ENCODE measurements at regions of chrX and their contacts with region 1.

Region 1: DNA sequence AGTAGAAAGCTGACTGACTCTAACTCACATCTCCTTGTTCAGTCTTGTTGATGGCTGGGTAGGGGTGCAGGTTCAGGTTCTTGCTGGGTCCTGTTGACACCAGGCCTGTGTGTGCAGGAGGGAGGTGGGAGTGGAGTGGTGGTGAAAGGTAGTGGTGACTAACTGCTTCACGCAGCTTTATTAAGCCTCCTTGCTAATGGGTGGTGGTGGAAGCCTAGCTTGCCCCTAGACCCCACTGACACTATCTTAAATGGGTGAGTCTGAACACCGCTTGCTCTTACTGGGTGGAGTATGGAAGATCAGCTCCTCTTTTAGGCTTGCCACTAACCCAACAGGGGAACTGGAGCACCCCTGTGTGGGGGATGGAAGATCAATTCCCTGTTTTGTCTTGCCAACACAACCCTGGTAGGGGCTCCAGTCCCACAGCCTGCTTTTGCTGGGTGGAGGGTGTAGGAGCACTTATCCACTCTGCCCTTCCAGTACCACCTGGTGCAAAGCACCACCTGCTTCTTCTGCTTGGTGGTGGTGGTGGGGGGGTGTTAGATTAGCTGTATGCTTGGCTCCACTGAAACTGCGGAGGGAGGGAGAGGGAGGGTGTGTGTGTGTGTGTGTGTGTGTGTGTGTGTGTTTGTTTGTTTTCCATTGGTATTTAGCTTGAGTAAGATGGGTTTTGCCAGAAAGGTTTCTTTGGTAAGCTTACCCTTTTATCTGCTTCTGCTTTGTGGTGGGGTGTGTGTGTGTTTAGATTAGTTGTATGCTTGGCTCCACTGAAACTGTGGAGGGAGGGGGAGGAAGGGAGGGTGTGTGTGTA is 25.6 kb downstream of the KDM6A start:
- DNase-seq: peak in 2 of 4 experiments; percentile 7 to 63
- ATAC-seq: peak; percentile 60
- H3K4me3 ChIP-seq: no peak overlapping the region
- H3K27ac ChIP-seq: no peak overlapping the region
- H3K4me1 ChIP-seq: peaks cover 15 to 24% of the 10 kb centered on the region in 2 experiments; a peak in 4 of 5 replicates
- H3K27me3 ChIP-seq: no peaks in the 10 kb centered on the region
- CTCF ChIP-seq: no peak
- EP300 ChIP-seq: no peak
- POLR2A ChIP-seq: no peak
- RAD21 ChIP-seq: no peak

Region 2: DNA sequence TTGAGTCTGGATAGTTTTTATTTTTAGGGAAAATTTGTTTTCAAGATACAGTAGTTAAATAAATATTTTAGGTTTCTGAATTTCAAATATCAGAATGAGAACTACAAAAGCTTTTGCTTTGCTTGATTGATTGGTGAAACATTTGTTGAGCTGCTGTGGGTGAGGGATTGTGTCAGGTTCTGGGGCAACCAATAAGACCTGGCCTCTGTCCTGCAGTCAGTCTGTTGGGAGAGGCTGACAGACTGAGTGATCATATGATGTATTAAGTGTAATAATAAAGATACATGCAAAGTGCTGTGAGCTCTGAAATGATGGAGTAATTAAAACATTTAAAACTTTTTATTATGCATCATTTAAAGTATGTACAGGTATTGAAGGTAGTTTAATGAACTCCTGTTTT is 16.0 kb before region 1 on chrX:
- CTCF ChIA-PET with region 1: no interaction called
- POLR2A ChIA-PET with region 1: interaction called, 12 read pairs
- in situ Hi-C with region 1: no loop called
- intact Hi-C with region 1: no loop called
- DNase-seq: no peak
- ATAC-seq: no peak
- H3K4me3 ChIP-seq: no peak overlapping the region
- H3K27ac ChIP-seq: no peak overlapping the region
- H3K4me1 ChIP-seq: peaks cover 2 to 4% of the 10 kb centered on the region in 2 experiments; a peak in 3 of 5 replicates
- H3K27me3 ChIP-seq: no peaks in the 10 kb centered on the region
- CTCF ChIP-seq: no peak
- EP300 ChIP-seq: no peak
- POLR2A ChIP-seq: no peak
- RAD21 ChIP-seq: no peak

Region 3: DNA sequence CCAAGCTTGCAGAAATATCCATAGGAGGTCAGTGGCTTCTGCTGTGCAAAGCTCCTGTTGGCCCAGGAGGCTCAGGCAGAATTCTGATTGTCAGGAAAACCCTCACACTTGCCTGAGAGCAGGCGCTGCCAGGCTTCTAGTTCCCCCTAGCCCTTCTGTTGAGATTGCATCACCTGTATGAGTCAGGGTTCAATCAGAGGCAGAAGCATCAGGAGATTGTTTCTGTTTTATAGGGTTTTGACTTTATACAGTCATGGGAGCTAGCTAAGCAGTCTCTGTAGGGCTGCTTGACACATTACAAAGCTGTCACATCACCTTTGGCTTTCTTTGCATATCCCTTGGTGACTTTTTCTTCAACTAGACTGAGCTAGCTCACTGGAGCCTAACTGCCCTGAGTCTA is 274.3 kb after region 1 on chrX:
- CTCF ChIA-PET with region 1: no interaction called
- POLR2A ChIA-PET with region 1: no interaction called
- in situ Hi-C with region 1: no loop called
- intact Hi-C with region 1: no loop called
- DNase-seq: peak in 1 of 4 experiments; percentile 7
- ATAC-seq: peak; percentile 72
- H3K4me3 ChIP-seq: no peak overlapping the region
- H3K27ac ChIP-seq: no peak overlapping the region
- H3K4me1 ChIP-seq: no peaks in the 10 kb centered on the region; a peak in 1 of 5 replicates
- H3K27me3 ChIP-seq: no peaks in the 10 kb centered on the region
- CTCF ChIP-seq: no peak
- EP300 ChIP-seq: no peak
- POLR2A ChIP-seq: no peak
- RAD21 ChIP-seq: 0 out of 4 replicates have a peak, but pooled peaks of 1 of the 2 experiments have one; percentile 3